ENCODE measurements at regions of chr11 and their contacts with region 1.

Region 1: GRCh38 chr11:113305440-113306336 is 8.7 kb upstream of the TTC12 start:
- DNase-seq: peak; percentile 55 to 70 (median 63)
- H3K4me3 ChIP-seq: no peak overlapping the region
- H3K4me3 Mint-ChIP-seq: peak overlapping the region in 1 of 2 donors; percentile 52
- H3K27ac ChIP-seq: no peak overlapping the region
- H3K27ac Mint-ChIP-seq: no peak overlapping the region
- H3K4me1 ChIP-seq: no peaks in the 10 kb centered on the region
- H3K4me1 Mint-ChIP-seq: no peaks in the 10 kb centered on the region
- H3K27me3 ChIP-seq: no peaks in the 10 kb centered on the region
- H3K27me3 Mint-ChIP-seq: peaks cover 6 to 16% (median 16%) of the 10 kb centered on the region in 3 donors
- CTCF ChIP-seq: peak; percentile 83

Region 2: GRCh38 chr11:113176599-113177365 is 128.9 kb before region 1 on chr11:
- intact Hi-C with region 1: no loop called
- DNase-seq: no peak
- H3K4me3 ChIP-seq: no peak overlapping the region
- H3K4me3 Mint-ChIP-seq: no peak overlapping the region
- H3K27ac ChIP-seq: no peak overlapping the region
- H3K27ac Mint-ChIP-seq: no peak overlapping the region
- H3K4me1 ChIP-seq: no peaks in the 10 kb centered on the region
- H3K4me1 Mint-ChIP-seq: no peaks in the 10 kb centered on the region
- H3K27me3 ChIP-seq: peaks cover 1 to 22% of the 10 kb centered on the region in 2 donors
- H3K27me3 Mint-ChIP-seq: peaks cover 18 to 35% (median 23%) of the 10 kb centered on the region in 3 donors
- CTCF ChIP-seq: no peak

Region 3: GRCh38 chr11:113532697-113533424 is 227.2 kb after region 1 on chr11:
- intact Hi-C with region 1: loop called (anchors 2 kb)
- DNase-seq: peak; percentile 29 to 63 (median 57)
- H3K4me3 ChIP-seq: no peak overlapping the region
- H3K4me3 Mint-ChIP-seq: no peak overlapping the region
- H3K27ac ChIP-seq: no peak overlapping the region
- H3K27ac Mint-ChIP-seq: no peak overlapping the region
- H3K4me1 ChIP-seq: no peaks in the 10 kb centered on the region
- H3K4me1 Mint-ChIP-seq: no peaks in the 10 kb centered on the region
- H3K27me3 ChIP-seq: no peaks in the 10 kb centered on the region
- H3K27me3 Mint-ChIP-seq: peaks cover 7 to 12% (median 8%) of the 10 kb centered on the region in 3 donors
- CTCF ChIP-seq: peak; percentile 87

Region 4: DNA sequence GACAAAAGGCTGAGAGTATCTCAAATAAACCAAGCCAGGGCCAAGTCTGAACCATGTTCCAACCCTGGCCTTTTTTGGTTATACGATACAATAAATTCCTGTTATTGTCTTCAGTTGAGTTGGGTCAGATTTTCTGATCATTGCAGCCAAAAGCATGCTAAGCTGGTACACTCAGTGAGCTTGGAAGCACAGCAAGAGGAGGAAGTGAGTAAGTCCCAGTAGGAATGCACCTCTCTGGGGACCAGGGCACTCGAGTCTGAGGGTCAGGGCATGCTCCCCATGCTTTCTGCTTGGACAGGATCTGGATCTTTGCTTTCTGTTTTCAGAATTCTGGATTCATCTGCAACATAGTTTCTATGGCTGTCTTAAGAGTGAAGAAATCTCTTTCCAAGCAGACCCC is 327.3 kb after region 1 on chr11:
- intact Hi-C with region 1: no loop called
- DNase-seq: no peak
- H3K4me3 ChIP-seq: no peak overlapping the region
- H3K4me3 Mint-ChIP-seq: no peak overlapping the region
- H3K27ac ChIP-seq: no peak overlapping the region
- H3K27ac Mint-ChIP-seq: no peak overlapping the region
- H3K4me1 ChIP-seq: no peaks in the 10 kb centered on the region
- H3K4me1 Mint-ChIP-seq: no peaks in the 10 kb centered on the region
- H3K27me3 ChIP-seq: no peaks in the 10 kb centered on the region
- H3K27me3 Mint-ChIP-seq: peaks cover 3 to 9% (median 3%) of the 10 kb centered on the region in 3 donors
- CTCF ChIP-seq: no peak

Region 5: DNA sequence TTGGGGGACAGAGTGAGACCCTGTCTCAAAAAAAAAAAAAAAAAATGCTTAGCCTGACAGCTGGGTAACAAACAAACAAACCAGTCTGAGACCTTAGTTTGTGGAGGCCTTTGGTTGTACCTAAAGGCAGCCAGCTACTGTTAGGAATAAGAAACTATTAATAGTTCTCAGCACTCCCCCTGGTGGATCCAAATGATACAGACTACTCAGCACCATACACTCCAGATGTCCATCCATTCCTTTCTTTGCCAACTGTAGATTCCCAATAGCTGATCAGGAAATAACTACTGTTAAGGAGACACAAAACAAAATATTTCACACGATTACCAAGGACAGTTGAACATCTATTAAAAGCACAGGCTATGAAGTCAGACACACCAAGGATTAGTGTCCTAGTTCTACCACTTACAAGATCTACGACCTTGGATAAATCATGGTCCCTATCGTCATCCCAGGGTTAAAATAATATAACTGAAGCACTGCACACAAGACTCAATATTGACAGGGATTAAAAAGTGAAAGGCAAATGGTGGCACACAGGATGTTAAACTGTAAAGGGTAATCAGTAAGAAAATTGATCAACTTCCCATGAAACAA is 491.1 kb after region 1 on chr11:
- intact Hi-C with region 1: loop called in 1 of 2 experiments (anchors 10 kb)
- DNase-seq: peak in 2 of 3 donors; percentile 4 to 21
- H3K4me3 ChIP-seq: no peak overlapping the region
- H3K4me3 Mint-ChIP-seq: no peak overlapping the region
- H3K27ac ChIP-seq: no peak overlapping the region
- H3K27ac Mint-ChIP-seq: no peak overlapping the region
- H3K4me1 ChIP-seq: no peaks in the 10 kb centered on the region
- H3K4me1 Mint-ChIP-seq: no peaks in the 10 kb centered on the region
- H3K27me3 ChIP-seq: no peaks in the 10 kb centered on the region
- H3K27me3 Mint-ChIP-seq: peaks cover 0 to 3% (median 0%) of the 10 kb centered on the region in 3 donors
- CTCF ChIP-seq: peak; percentile 74

Measured in CD14-positive monocyte (primary cell).